HEK293T (cell line): ENCODE measurements at regions of chr10 and their contacts with region 1.

Region 1: DNA sequence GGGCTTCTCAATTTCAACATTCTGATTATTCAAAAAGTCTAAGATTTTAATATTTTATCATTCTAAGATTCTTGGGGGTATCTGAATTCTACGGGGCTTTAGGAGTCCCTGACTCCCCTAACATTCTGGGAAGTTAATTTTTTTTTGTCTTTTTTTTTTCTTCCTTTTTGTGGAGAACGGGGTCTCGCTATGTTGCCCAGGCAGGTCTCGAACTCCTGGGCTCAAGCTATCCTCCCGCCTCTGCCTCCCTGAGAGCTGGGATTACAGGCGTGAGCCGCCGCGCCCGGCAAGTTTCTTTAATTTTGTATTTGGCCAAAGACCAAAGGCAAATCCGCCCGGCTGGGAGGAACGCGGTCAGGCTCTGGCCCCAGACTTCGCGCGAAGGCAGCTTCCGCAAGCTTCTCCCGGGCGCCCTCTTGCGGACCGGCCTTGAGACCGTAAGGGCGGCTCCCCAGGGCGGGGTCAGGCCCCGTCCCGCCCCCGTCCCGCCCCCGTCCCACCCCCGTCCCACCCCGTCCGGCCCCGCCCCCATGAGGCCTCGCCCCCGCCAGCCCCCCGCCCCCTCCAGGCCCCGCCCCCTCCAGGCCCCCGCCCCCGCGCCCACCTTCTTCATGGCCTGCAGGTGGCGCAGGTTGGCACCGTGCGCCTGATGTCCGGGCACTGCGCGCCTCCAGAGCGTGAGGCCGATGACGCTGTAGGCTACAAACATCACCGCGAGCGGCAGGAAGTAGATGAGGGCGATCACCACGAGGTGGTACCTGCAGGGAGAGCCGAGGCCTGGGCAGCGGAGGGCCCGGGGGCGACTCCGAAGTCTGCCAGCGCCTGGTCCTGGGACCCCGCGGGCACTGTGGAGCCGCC is 8.2 kb downstream of the TACR2 start:
- DNase-seq: peak; percentile 94

Region 2: GRCh38 chr10:69123747-69124562 is 284.6 kb before region 1 on chr10 and contains the start of gene VPS26A:
- CTCF ChIA-PET with region 1: no interaction called
- POLR2A ChIA-PET with region 1: no interaction called
- DNase-seq: peak; percentile 99

Region 3: DNA sequence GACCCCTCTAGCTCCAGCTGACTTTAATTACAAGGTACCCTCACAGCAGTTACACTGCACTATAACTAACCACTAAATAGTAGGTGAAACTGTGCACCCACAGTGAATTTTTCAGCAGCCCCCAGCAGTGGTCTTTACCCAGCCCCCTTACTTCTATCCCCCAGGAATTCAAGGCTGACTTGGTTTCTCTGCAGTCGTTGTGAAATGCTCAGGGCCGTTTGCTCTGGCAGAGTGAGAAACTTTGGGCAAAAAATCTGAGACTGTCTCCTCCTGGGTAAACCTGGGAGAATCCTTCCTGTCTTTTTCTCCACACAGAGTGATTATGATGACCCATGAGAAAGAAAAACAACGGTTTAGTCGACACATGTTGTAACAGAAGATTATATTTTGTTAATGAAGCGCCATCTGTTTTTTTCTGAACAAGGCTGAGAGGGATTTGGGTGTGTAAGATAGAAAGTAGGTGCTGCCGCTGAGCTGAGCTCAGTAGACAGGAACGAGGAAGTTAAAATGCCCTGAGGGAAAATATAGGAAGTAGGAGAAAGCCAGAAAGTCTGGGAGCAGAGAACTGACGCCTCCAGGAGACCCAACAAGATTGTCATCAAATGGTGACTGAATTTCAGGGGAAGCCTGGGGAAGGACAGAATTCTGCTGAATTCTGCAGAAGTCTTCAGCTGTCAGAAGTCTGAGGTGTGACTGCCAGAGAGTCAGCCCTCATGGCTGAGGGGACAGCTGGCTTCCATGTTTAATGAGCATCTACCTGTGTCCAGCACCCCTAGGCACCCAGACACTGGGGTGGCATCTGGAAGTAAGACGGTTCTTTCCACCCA is 29.9 kb after region 1 on chr10:
- CTCF ChIA-PET with region 1: no interaction called
- POLR2A ChIA-PET with region 1: no interaction called
- DNase-seq: no peak

Region 4: GRCh38 chr10:69506834-69507721 is 98.5 kb after region 1 on chr10:
- CTCF ChIA-PET with region 1: interaction called, 13 read pairs
- POLR2A ChIA-PET with region 1: interaction called, 4 read pairs
- DNase-seq: no peak